ENCODE measurements at regions of chr7 and their contacts with region 1.

Region 1: DNA sequence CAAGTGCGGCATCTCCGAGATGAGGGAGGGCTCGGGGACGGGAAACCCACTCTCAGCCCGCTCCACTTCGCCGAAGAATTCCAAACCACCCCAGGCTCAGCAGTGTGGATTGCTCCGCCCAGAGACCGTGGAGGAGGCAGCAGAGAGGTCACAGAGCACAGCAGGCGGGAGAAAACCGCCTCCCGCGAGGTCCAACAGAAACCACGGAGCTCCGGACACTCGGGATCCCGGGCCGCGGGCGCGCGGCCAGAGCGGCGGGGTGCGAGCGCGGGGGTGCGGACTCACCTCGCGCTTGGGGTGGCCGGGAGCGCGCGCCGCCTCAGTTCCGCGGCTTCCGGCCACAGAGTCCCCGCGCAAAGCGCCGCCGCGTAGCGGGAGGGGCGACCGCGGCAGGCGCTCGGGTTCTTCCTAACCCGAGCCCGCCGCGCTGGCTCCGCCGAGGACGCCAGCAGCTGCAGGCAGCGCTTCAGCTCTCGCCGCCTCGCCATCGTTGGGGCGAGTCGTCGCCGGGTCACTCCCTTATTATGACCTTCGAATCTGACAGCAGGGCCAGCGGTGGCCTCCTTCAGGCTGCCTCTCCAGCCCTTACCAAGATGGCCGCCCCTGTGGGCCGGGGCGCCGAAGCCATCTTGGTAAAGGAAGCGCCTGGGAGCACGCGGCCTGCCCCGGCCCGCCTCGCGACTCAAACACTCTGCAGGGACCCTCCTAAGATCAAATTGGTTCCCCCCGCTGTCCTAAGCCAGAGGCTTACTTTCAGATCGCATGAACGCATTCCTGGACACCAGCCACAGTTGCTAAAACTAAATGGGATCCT is at the start of gene NAPEPLD:
- DNase-seq: peak; percentile 89 to 91
- ATAC-seq: peak; percentile 95 to 98 (median 96)
- H3K4me3 ChIP-seq: peak within 1 kb of the TSS; percentile 46 to 90 (median 74)
- H3K27ac ChIP-seq: peak within 1 kb of the TSS; percentile 95 to 99 (median 97)
- H3K4me1 ChIP-seq: peaks cover 0 to 30% (median 22%) of the 10 kb centered on the region in 9 donors
- H3K27me3 ChIP-seq: no peaks in the 10 kb centered on the region
- CTCF ChIP-seq: peak in 2 of 9 donors; percentile 17 to 20
- total RNA-seq, gene NAPEPLD: 7.5 to 11.6 (median 9.0) TPM

Region 2: DNA sequence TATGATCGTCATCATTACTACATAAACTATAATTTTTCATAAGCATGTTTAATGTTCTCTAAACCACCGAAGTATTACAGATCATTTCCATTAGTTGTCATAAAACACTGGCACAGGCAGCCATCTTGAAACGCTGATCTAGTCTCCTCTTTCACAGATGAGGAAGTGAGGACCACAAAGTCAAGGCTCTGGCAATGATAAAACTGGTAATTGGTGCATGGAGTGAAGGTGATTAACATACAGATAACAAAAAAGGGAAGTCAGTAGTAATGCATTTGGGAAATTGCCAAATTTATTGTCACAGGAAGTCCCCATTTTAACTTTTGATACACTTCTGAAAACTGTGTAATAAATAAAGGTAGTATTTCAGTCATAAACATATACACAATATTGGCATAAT is 123.9 kb before region 1 on chr7:
- intact Hi-C with region 1: no loop called
- DNase-seq: no peak
- ATAC-seq: no peak
- H3K4me3 ChIP-seq: no peak overlapping the region
- H3K27ac ChIP-seq: no peak overlapping the region
- H3K4me1 ChIP-seq: no peaks in the 10 kb centered on the region
- H3K27me3 ChIP-seq: no peaks in the 10 kb centered on the region
- CTCF ChIP-seq: no peak

Region 3: DNA sequence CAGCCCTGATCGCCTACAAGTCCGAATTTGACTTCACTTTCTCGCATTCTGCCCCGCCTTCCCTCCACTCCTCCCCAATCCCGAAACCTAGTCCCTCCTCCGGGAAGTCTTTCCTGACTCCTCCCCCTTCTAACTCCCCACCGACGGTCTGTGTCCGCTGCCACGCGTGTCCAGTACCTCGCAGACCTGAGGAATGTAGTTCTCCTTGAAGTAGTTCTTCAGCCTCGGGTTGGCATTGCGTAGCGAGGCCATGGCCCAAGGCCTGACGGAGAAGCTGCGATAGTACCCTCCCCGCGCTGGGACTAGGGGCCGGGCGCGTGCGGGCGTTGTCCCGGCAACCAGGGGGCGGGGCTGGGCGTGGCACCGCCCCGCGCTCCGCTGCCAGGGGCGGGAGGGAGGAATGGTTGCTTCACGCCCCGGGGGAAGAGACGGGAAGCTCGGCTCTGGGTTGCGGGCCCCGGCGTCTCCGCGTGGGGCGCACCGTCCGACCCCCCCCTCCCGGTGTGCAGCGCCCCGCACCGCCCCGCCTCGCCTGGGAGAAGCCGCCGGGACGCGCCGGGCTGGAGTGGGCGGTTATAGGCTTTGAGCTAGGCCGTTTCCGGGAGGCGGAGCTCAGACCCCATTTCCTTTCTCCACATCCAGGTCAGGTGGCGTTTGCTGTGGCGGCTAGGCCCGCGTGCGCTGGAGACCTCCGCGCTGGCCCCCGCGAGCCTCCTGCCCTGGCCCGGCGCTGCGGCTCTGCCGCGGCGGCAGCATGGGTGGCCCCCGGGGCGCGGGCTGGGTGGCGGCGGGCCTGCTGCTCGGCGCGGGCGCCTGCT is 74.5 kb before region 1 on chr7 and contains the starts of genes ARMC10 and FBXL13:
- intact Hi-C with region 1: loop called in 3 of 10 experiments (anchors 1 to 10 kb)
- DNase-seq: peak; percentile 90 to 92
- ATAC-seq: peak; percentile 95 to 98 (median 97)
- H3K4me3 ChIP-seq: peak within 1 kb of the TSS; percentile 67 to 91 (median 76)
- H3K27ac ChIP-seq: peak within 1 kb of the TSS; percentile 87 to 97 (median 92)
- H3K4me1 ChIP-seq: peaks cover 0 to 31% (median 18%) of the 10 kb centered on the region in 9 donors
- H3K27me3 ChIP-seq: no peaks in the 10 kb centered on the region
- CTCF ChIP-seq: peak in 6 of 9 donors; percentile 11 to 57 (median 38)
- total RNA-seq, gene ARMC10: 16.2 to 31.2 (median 23.6) TPM
- total RNA-seq, gene FBXL13: 0.28 to 0.87 (median 0.45) TPM